CD8-positive, alpha-beta T cell (primary cell): ENCODE measurements at regions of chr3 and their contacts with region 1.

Region 1: DNA sequence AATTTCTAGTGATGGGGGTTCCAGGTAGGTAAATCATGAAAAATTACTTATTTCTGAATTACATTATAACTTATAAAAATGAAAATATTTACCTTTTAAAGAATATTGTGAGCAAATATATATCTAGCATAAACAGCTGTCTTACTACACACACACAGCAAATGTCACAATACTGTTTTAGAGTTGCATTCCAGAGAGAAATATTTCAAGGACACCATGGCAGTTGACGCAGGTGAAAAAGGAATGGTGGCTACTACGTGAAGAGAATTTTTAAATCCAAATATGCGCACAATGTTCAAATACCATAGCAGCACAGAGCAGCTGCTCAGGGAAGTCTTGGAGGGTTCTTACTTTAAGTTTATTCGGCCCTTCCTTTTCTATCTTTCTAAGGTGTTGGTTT is 356.2 kb downstream of the CGGBP1 start:
- DNase-seq: no peak
- ATAC-seq: no peak
- H3K4me3 ChIP-seq: no peak overlapping the region
- H3K4me3 Mint-ChIP-seq: no peak overlapping the region
- H3K27ac ChIP-seq: no peak overlapping the region
- H3K27ac Mint-ChIP-seq: no peak overlapping the region
- H3K4me1 ChIP-seq: no peaks in the 10 kb centered on the region
- H3K4me1 Mint-ChIP-seq: no peaks in the 10 kb centered on the region
- H3K27me3 ChIP-seq: no peaks in the 10 kb centered on the region
- H3K27me3 Mint-ChIP-seq: peaks cover 4% of the 10 kb centered on the region
- CTCF ChIP-seq: no peak

Region 2: DNA sequence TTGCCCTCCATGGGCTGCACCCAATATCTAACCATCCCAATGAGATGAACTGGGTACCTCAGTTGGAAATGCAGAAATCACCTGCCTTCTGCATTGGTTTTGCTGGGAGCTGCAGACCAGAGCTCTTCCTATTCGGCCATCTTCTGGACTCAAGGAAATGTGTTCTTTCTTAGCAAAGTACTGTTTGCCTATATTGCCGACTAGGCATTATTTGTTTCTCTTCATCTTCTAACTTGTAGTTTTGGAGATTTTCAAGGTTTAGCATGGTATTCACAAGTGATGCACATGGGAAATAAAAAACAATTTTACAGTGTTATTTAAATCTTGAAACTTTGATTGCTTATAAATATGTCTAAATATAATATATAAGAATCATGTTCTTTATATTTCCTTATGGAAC is 48.4 kb before region 1 on chr3:
- CTCF ChIA-PET with region 1: no interaction called
- POLR2A ChIA-PET with region 1: no interaction called
- intact Hi-C with region 1: loop called in 1 of 2 experiments (anchors 1 kb)
- DNase-seq: no peak
- ATAC-seq: no peak
- H3K4me3 ChIP-seq: no peak overlapping the region
- H3K4me3 Mint-ChIP-seq: no peak overlapping the region
- H3K27ac ChIP-seq: no peak overlapping the region
- H3K27ac Mint-ChIP-seq: no peak overlapping the region
- H3K4me1 ChIP-seq: no peaks in the 10 kb centered on the region
- H3K4me1 Mint-ChIP-seq: no peaks in the 10 kb centered on the region
- H3K27me3 ChIP-seq: no peaks in the 10 kb centered on the region
- H3K27me3 Mint-ChIP-seq: peaks cover 9% of the 10 kb centered on the region
- CTCF ChIP-seq: no peak